Gastrocnemius medialis (tissue), 4 donors: ENCODE measurements at regions of chr12 and their contacts with region 1.

Region 1: DNA sequence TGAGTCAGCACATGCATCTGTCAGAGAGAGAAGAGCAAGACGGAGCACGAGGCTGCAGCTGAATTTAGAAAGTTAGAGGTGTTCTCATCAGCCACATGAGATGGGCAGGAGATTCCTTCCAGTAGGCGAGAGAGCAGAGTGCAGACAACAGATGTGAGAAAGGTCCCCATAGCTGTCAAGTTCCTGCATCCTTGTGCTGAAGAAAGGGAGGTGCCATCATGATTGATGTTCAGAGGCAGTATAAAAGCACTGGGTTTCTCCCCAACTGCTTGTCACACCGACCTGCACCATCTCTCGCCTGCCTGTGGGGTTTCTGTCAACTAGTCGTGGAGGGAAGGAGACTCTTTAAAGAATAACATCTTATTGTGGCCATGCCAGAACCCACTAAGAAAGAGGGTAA is at the start of gene MYBPC1:
- DNase-seq: peak; percentile 86 to 93
- ATAC-seq: peak; percentile 89 to 90
- H3K4me3 ChIP-seq: peak within 1 kb of the TSS; percentile 48 to 64 (median 52)
- H3K27ac ChIP-seq: peak within 1 kb of the TSS; percentile 85 to 93 (median 92)
- H3K4me1 ChIP-seq: peaks cover 24 to 28% of the 10 kb centered on the region in 2 donors
- H3K27me3 ChIP-seq: no peaks in the 10 kb centered on the region
- CTCF ChIP-seq: peak; percentile 55 to 87 (median 73)
- POLR2A ChIP-seq: peak; percentile 87 to 97
- total RNA-seq, gene MYBPC1: 2,958 to 5,874 (median 4,932) TPM

Region 2: GRCh38 chr12:101216808-101217207 is 377.9 kb before region 1 on chr12:
- in situ Hi-C with region 1: no loop called
- intact Hi-C with region 1: no loop called
- DNase-seq: no peak
- ATAC-seq: no peak
- H3K4me3 ChIP-seq: no peak overlapping the region
- H3K27ac ChIP-seq: no peak overlapping the region
- H3K4me1 ChIP-seq: no peaks in the 10 kb centered on the region
- H3K27me3 ChIP-seq: no peaks in the 10 kb centered on the region
- CTCF ChIP-seq: no peak
- POLR2A ChIP-seq: no peak

Region 3: GRCh38 chr12:101356794-101357193 is 237.9 kb before region 1 on chr12:
- in situ Hi-C with region 1: no loop called
- intact Hi-C with region 1: no loop called
- DNase-seq: no peak
- ATAC-seq: no peak
- H3K4me3 ChIP-seq: no peak overlapping the region
- H3K27ac ChIP-seq: no peak overlapping the region
- H3K4me1 ChIP-seq: no peaks in the 10 kb centered on the region
- H3K27me3 ChIP-seq: no peaks in the 10 kb centered on the region
- CTCF ChIP-seq: no peak
- POLR2A ChIP-seq: no peak

Region 4: DNA sequence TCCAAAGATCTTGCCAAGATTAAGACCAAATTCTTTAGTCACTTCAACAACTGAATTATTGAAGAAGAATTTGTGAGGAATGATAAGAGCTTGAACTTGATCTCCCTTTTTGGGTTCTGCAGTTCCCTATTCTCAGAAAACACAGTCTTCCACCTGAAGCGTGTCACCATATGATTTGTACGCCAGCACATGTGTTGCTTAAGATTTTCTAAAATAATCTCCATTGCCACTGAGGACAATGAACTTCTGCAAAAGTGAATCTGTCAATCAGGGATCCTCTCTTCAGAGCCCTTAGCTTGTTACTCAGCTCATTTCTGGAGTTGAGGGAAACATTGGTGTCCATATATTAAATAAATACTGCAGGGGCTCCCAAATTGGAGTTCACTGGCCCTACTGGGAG is 123.8 kb before region 1 on chr12:
- in situ Hi-C with region 1: no loop called
- intact Hi-C with region 1: no loop called
- DNase-seq: no peak
- ATAC-seq: no peak
- H3K4me3 ChIP-seq: no peak overlapping the region
- H3K27ac ChIP-seq: no peak overlapping the region
- H3K4me1 ChIP-seq: no peaks in the 10 kb centered on the region
- H3K27me3 ChIP-seq: no peaks in the 10 kb centered on the region
- CTCF ChIP-seq: no peak
- POLR2A ChIP-seq: no peak

Region 5: DNA sequence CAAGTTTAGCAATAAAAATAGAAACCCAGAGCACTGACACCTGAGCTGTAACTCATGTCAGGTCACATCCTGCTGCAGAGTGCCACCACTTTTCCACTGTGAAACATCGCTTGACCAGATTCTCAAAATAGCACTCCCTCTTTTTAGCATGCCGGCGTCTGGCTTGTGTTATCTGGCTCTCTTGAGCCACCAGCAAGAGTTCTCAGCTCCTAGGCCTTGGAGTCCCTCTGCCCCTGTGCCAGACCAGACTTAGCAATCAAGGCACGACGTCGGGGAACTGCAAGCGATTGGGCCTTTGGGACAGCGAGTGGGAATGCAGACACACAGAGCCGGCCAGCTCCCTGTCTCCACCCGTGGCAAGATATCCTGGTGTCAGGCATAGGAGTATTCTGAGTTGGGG is 67.0 kb before region 1 on chr12:
- in situ Hi-C with region 1: no loop called
- intact Hi-C with region 1: loop called (anchors 2 kb)
- DNase-seq: peak; percentile 71 to 89
- ATAC-seq: peak; percentile 92 to 93
- H3K4me3 ChIP-seq: peak overlapping the region in 2 of 4 donors; percentile 15 to 22
- H3K27ac ChIP-seq: peak overlapping the region; percentile 85 to 94 (median 92)
- H3K4me1 ChIP-seq: peaks cover 20% of the 10 kb centered on the region in 2 donors
- H3K27me3 ChIP-seq: no peaks in the 10 kb centered on the region
- CTCF ChIP-seq: no peak
- POLR2A ChIP-seq: peak in 1 of 2 donors; percentile 49

Region 6: GRCh38 chr12:101552277-101552676 is 42.4 kb before region 1 on chr12:
- in situ Hi-C with region 1: no loop called
- intact Hi-C with region 1: no loop called
- DNase-seq: peak; percentile 80 to 90
- ATAC-seq: peak; percentile 99 to 100
- H3K4me3 ChIP-seq: no peak overlapping the region
- H3K27ac ChIP-seq: peak overlapping the region; percentile 86 to 93 (median 90)
- H3K4me1 ChIP-seq: peaks cover 23 to 36% of the 10 kb centered on the region in 2 donors
- H3K27me3 ChIP-seq: no peaks in the 10 kb centered on the region
- CTCF ChIP-seq: no peak
- POLR2A ChIP-seq: no peak

Region 7: GRCh38 chr12:101607902-101608742 is 13.4 kb after region 1 on chr12:
- in situ Hi-C with region 1: no loop called
- intact Hi-C with region 1: loop called (anchors 2 kb)
- DNase-seq: peak; percentile 66
- ATAC-seq: peak; percentile 37 to 40
- H3K4me3 ChIP-seq: peak overlapping the region; percentile 3 to 32 (median 16)
- H3K27ac ChIP-seq: peak overlapping the region; percentile 85 to 93 (median 92)
- H3K4me1 ChIP-seq: peaks cover 66 to 81% of the 10 kb centered on the region in 2 donors
- H3K27me3 ChIP-seq: no peaks in the 10 kb centered on the region
- CTCF ChIP-seq: no peak
- POLR2A ChIP-seq: peak in 1 of 2 donors; percentile 30